HepG2 (cell line): ENCODE measurements at regions of chr2 and their contacts with region 1.

Region 1: GRCh38 chr2:238784671-238785527 is 63.0 kb upstream of the TWIST2 start:
- DNase-seq: peak; percentile 48
- ATAC-seq: peak; percentile 95
- H3K4me3 ChIP-seq: no peak overlapping the region
- H3K27ac ChIP-seq: no peak overlapping the region
- H3K4me1 ChIP-seq: no peaks in the 10 kb centered on the region
- H3K27me3 ChIP-seq: peaks cover 2 to 52% of the 10 kb centered on the region in 2 experiments
- CTCF ChIP-seq: peak; percentile 95
- EP300 ChIP-seq: no peak
- POLR2A ChIP-seq: no peak
- RAD21 ChIP-seq: peak; percentile 78

Region 2: DNA sequence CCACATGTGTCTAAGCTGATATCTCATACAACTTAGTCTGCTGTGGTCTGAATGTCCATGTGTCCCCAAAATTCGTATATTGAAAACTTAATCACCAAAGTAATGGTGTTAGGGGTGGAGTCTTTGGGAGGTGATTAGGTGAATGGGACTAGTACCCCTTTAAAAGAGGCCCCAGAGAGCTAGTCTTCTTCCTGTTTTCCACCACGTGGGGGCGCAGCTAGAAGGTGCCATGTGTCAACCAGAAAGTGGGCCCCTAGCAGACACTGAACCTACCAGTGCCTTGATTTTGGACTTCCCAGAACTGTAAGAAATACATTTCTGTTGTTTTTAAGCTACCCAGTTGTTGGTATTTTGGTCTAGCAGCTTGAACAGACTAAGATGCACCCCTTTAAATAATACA is 271.6 kb before region 1 on chr2:
- CTCF ChIA-PET with region 1: interaction called, 9 read pairs
- POLR2A ChIA-PET with region 1: no interaction called
- in situ Hi-C with region 1: no loop called
- intact Hi-C with region 1: loop called (anchors 1 kb)
- DNase-seq: peak; percentile 68
- ATAC-seq: peak; percentile 77
- H3K4me3 ChIP-seq: no peak overlapping the region
- H3K27ac ChIP-seq: no peak overlapping the region
- H3K4me1 ChIP-seq: peaks cover 38% of the 10 kb centered on the region
- H3K27me3 ChIP-seq: no peaks in the 10 kb centered on the region
- CTCF ChIP-seq: peak; percentile 72
- EP300 ChIP-seq: no peak
- POLR2A ChIP-seq: no peak
- RAD21 ChIP-seq: peak; percentile 77; the same call in 1 of the 2 replicates

Region 3: GRCh38 chr2:238720232-238720672 is 64.6 kb before region 1 on chr2:
- CTCF ChIA-PET with region 1: interaction called, 20 read pairs
- POLR2A ChIA-PET with region 1: no interaction called
- in situ Hi-C with region 1: loop called (anchors 5 kb)
- intact Hi-C with region 1: loop called (anchors 1 kb)
- DNase-seq: peak; percentile 58
- ATAC-seq: peak; percentile 98
- H3K4me3 ChIP-seq: no peak overlapping the region
- H3K27ac ChIP-seq: no peak overlapping the region
- H3K4me1 ChIP-seq: no peaks in the 10 kb centered on the region
- H3K27me3 ChIP-seq: peaks cover under 1 to 24% of the 10 kb centered on the region in 2 experiments; a peak in 4 of 5 replicates
- CTCF ChIP-seq: peak; percentile 95
- EP300 ChIP-seq: no peak
- POLR2A ChIP-seq: no peak
- RAD21 ChIP-seq: peak; percentile 73

Region 4: GRCh38 chr2:238869293-238870124 is 84.6 kb after region 1 on chr2:
- CTCF ChIA-PET with region 1: interaction called, 5 read pairs
- POLR2A ChIA-PET with region 1: no interaction called
- in situ Hi-C with region 1: no loop called
- intact Hi-C with region 1: loop called (anchors 1 kb)
- DNase-seq: peak; percentile 39
- ATAC-seq: peak; percentile 15
- H3K4me3 ChIP-seq: no peak overlapping the region
- H3K27ac ChIP-seq: no peak overlapping the region
- H3K4me1 ChIP-seq: peaks cover 47% of the 10 kb centered on the region
- H3K27me3 ChIP-seq: peaks cover 0 to 16% of the 10 kb centered on the region in 2 experiments; a peak in 3 of 5 replicates
- CTCF ChIP-seq: no peak
- EP300 ChIP-seq: no peak
- POLR2A ChIP-seq: no peak
- RAD21 ChIP-seq: no peak

Region 5: DNA sequence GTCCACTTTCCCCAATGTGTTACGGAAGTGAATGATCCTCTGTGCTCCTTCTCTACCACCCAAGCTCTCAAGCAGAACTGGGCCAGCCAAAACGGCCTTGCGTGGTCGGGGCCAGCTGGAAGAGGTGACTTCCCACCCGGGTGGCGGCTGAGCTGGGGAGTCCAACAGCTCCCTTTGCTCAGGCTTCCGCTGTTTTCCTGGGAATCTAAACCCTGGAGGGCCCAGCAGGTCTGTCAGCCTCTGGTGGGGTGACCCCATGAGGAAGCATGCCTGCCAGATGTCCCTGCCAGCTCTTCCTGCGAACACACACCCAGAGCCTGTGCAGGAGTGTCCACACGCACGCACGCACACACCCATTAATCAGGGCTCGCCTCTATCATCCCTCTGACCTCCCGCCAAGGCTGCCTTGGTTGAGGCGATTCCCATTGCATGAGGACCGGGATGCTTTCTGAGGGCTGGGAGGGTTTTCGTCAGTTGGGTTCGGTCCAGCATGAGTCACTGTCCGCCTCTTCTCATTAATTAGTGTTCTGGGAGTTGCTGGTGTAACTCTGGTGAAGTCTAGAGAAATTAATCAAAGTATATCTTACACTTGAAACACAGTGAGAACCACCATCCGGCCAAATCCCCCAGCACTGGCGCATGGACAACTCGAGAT is 153.6 kb after region 1 on chr2:
- CTCF ChIA-PET with region 1: no interaction called
- POLR2A ChIA-PET with region 1: no interaction called
- in situ Hi-C with region 1: no loop called
- intact Hi-C with region 1: no loop called
- DNase-seq: no peak
- ATAC-seq: no peak
- H3K4me3 ChIP-seq: no peak overlapping the region
- H3K27ac ChIP-seq: no peak overlapping the region
- H3K4me1 ChIP-seq: no peaks in the 10 kb centered on the region
- H3K27me3 ChIP-seq: peaks cover 12 to 60% of the 10 kb centered on the region in 2 experiments; a peak in 4 of 5 replicates
- CTCF ChIP-seq: no peak
- EP300 ChIP-seq: no peak
- POLR2A ChIP-seq: no peak
- RAD21 ChIP-seq: no peak